Activated T-helper 2 cell treated with anti-CD3 and anti-CD28 coated beads, Interferon-gamma antibody, Interleukin-2, Interleukin-4, amounts not matched to agents 10 μg/mL and 5 μg/mL and 100 μg/mL, durations not matched to agents 14 hours and 24 hours and 36 hours (primary cell): ENCODE measurements at regions of chr19 and their contacts with region 1.

Region 1: GRCh38 chr19:18636183-18636968 is 452 bp upstream of the KLHL26 start:
- DNase-seq: peak; percentile 97
- H3K4me3 Mint-ChIP-seq: peak overlapping the region; percentile 85
- H3K27ac Mint-ChIP-seq: peak overlapping the region; percentile 87
- H3K4me1 Mint-ChIP-seq: peaks cover 20% of the 10 kb centered on the region
- H3K27me3 Mint-ChIP-seq: peaks cover 5% of the 10 kb centered on the region

Region 2: DNA sequence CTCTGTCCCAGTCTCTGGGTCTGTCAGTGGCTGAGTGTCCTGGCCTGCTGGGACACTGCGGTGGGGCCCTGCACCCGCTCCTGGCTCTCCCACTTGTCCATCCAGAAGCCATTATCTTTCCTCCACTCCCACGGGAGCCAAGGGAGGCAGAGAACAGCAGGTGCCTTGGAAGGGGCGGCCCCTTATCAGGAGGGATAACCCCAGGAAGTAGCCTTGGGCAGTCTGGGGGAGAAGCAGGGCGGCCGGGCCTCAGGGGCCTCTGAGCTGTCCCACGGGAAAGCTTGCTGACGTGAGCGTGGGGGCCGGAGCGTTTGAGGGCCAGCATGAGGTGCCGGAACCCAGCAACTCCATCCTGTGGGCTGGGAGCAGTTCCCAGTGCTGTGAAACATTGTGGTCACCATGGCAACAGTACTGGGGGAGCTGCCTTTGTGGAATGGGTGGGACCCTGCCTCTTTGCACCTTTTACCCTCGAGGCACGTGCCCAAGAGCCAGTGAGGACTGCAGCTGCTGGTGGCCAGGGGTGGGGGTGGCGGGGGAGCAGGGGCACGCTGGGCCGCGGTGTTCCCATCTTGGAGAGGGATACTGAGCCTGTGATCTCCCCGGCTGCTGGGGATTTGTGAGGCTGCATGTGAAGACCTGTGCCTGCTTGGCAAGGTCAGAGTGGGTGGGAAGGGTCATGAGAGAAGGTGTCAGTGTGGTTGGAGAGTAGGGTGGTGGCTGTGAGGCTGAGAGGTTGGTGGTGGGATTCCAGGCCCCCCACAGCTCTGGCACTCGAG is 21.4 kb after region 1 on chr19:
- intact Hi-C with region 1: no loop called
- DNase-seq: no peak
- H3K4me3 Mint-ChIP-seq: no peak overlapping the region
- H3K27ac Mint-ChIP-seq: no peak overlapping the region
- H3K4me1 Mint-ChIP-seq: peaks cover 2% of the 10 kb centered on the region
- H3K27me3 Mint-ChIP-seq: no peaks in the 10 kb centered on the region

Region 3: GRCh38 chr19:18831524-18832305 is 195.3 kb after region 1 on chr19 and contains the start of gene UPF1:
- intact Hi-C with region 1: loop called (anchors 5 kb)
- DNase-seq: peak; percentile 95
- H3K4me3 Mint-ChIP-seq: peak within 1 kb of the TSS; percentile 98
- H3K27ac Mint-ChIP-seq: peak within 1 kb of the TSS; percentile 87
- H3K4me1 Mint-ChIP-seq: peaks cover 31% of the 10 kb centered on the region
- H3K27me3 Mint-ChIP-seq: peaks cover 5% of the 10 kb centered on the region
- total RNA-seq, gene UPF1: 99.5 and 110 TPM in 2 replicates

Region 4: GRCh38 chr19:18919086-18919899 is 282.9 kb after region 1 on chr19 and contains the starts of genes COPE and DDX49:
- intact Hi-C with region 1: loop called (anchors 1 kb)
- DNase-seq: peak; percentile 98
- H3K4me3 Mint-ChIP-seq: peak within 1 kb of the TSS; percentile 96
- H3K27ac Mint-ChIP-seq: peak within 1 kb of the TSS; percentile 94
- H3K4me1 Mint-ChIP-seq: peaks cover 19% of the 10 kb centered on the region
- H3K27me3 Mint-ChIP-seq: no peaks in the 10 kb centered on the region
- total RNA-seq, gene COPE: 231 and 240 TPM in 2 replicates
- total RNA-seq, gene DDX49: 75.2 and 77.5 TPM in 2 replicates

Region 5: DNA sequence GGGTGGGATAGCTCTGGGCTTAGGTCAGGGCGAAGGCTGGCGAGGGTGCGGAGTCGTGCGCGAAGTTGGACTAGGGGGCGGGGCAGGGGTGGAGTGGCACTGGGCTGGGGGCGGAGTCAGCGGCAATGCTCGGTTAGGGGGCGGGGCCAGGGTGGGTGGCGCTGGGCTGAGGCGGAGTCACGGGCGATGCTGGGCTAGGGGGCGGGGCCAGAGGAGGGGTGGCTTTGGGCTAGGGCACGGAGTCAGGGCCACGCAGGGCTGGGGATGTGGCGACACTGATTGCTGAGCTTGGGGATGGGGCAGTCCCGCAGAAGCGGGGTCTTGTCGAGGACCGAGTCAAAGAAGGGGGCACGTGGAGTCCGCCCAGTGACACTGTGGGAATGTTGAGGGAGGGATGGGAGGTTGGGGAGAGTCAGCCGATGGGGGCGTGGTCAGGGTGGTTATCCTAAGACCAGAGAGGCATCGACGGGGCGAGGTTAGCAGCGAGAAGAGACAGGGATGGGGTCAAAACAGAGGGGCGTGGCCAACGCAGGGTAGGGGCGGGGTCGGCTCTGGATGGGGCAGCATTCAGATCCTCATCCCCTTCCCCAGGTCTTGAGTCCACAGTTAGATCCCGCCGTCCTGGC is 296.0 kb after region 1 on chr19:
- intact Hi-C with region 1: loop called (anchors 1 kb)
- DNase-seq: peak; percentile 66
- H3K4me3 Mint-ChIP-seq: peak overlapping the region; percentile 74
- H3K27ac Mint-ChIP-seq: no peak overlapping the region
- H3K4me1 Mint-ChIP-seq: peaks cover 4% of the 10 kb centered on the region
- H3K27me3 Mint-ChIP-seq: peaks cover 12% of the 10 kb centered on the region